B cell (primary cell): ENCODE measurements at regions of chr20 and their contacts with region 1.

Region 1: DNA sequence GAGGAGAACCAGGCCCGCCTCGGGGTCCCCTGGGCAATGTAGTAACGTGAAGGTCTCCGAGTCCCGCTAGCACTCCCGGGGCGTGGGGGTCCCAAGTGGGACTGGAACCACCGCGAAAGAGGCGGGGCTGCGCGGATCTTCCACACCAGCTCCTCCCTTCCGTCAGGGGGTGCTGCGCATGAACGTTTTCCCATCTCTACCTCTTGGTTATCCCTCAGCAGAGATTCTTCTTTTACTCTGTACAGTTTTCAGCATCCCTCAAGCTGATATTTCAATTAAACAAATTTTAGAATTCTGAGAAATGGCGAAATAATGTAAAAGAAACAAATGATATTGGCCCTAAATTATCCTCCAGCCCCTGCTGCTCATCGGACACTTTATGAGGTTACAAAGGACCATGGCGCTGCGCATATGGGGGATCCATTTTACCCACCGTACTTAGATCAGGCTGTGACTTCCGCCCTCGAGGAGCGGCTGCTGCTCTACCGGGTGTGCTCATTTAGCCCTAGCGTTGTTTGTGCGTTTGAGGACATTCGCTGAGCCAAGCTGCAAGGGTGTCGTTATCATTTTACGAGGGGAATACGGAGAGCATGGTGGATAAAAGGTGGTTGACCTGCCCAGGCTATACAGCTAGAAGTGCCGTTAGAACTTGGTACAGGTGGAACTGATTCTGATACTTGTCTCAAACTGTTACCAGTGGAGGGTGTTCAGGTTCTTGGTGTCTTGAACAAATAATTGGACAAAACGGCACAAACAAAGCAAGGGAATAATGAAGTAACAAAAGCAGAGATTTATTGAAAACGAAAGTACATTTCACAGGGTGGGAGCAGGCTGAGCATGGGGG is 75.2 kb upstream of the CHD6 start:
- DNase-seq: peak; percentile 92
- ATAC-seq: peak; percentile 79
- H3K4me3 ChIP-seq: peak overlapping the region; percentile 84 to 96 (median 96)
- H3K4me3 Mint-ChIP-seq: peak overlapping the region; percentile 88
- H3K27ac ChIP-seq: peak overlapping the region; percentile 81 to 86
- H3K27ac Mint-ChIP-seq: peak overlapping the region; percentile 93
- H3K4me1 ChIP-seq: peaks cover 8 to 17% of the 10 kb centered on the region in 2 donors
- H3K4me1 Mint-ChIP-seq: peaks cover 13% of the 10 kb centered on the region
- H3K27me3 ChIP-seq: peaks cover 0 to 4% (median 2%) of the 10 kb centered on the region in 4 experiments
- H3K27me3 Mint-ChIP-seq: peaks cover 7% of the 10 kb centered on the region
- CTCF ChIP-seq: peak; percentile 67

Region 2: GRCh38 chr20:41317536-41318270 is 375.7 kb before region 1 on chr20 and contains the start of gene ZHX3:
- CTCF ChIA-PET with region 1: no interaction called
- POLR2A ChIA-PET with region 1: no interaction called
- intact Hi-C with region 1: loop called (anchors 2 kb)
- DNase-seq: peak; percentile 98
- ATAC-seq: peak; percentile 95
- H3K4me3 ChIP-seq: peak within 1 kb of the TSS in 4 of 5 experiments; percentile 65 to 86 (median 74)
- H3K4me3 Mint-ChIP-seq: peak within 1 kb of the TSS; percentile 91
- H3K27ac ChIP-seq: peak within 1 kb of the TSS; percentile 63 to 76
- H3K27ac Mint-ChIP-seq: peak within 1 kb of the TSS; percentile 91
- H3K4me1 ChIP-seq: peaks cover 11 to 12% of the 10 kb centered on the region in 2 donors
- H3K4me1 Mint-ChIP-seq: peaks cover 22% of the 10 kb centered on the region
- H3K27me3 ChIP-seq: no peaks in the 10 kb centered on the region
- H3K27me3 Mint-ChIP-seq: no peaks in the 10 kb centered on the region
- CTCF ChIP-seq: no peak
- total RNA-seq, gene ZHX3: 22.2 and 24.4 TPM in 2 replicates

Region 3: DNA sequence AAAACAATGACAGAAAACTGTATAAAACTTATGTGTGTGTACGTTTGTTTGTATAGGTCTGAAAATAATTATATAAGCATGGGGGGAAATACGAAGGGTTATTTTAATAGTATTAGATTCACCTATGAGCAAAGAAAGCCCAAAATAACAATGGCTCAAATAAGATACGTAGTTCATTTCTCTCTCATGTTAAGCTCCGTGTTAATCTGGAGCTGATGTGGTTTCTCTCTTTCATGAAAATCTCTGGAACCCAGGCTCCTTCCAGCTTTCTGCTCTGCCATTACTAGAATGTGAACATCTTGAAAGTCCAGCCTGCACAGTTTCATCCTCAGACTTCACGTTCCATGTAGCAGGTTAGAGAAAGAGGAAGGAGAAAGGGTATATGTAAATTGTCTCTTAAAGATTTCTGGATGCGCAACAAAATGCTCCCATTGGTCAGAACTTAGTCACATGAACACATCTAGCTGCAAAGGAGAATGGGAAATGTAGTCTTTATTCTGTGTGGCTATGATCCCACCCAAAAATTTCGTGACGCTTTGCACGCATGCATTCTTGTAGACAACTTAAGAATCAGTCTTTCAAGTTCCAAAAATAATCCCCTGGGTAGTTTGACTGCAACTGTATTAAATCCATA is 28.9 kb before region 1 on chr20:
- CTCF ChIA-PET with region 1: interaction called, 6 read pairs
- POLR2A ChIA-PET with region 1: interaction called, 4 read pairs
- intact Hi-C with region 1: loop called (anchors 1 kb)
- DNase-seq: peak; percentile 66
- ATAC-seq: peak; percentile 88
- H3K4me3 ChIP-seq: peak overlapping the region in 2 of 5 experiments; percentile 29 to 47
- H3K4me3 Mint-ChIP-seq: peak overlapping the region; percentile 83
- H3K27ac ChIP-seq: no peak overlapping the region
- H3K27ac Mint-ChIP-seq: peak overlapping the region; percentile 88
- H3K4me1 ChIP-seq: no peaks in the 10 kb centered on the region
- H3K4me1 Mint-ChIP-seq: peaks cover 6% of the 10 kb centered on the region
- H3K27me3 ChIP-seq: peaks cover 0 to 12% (median 2%) of the 10 kb centered on the region in 4 experiments
- H3K27me3 Mint-ChIP-seq: peaks cover 31% of the 10 kb centered on the region
- CTCF ChIP-seq: no peak